ENCODE measurements at regions of chr6 and their contacts with region 1.

Region 1: GRCh38 chr6:113414511-113414910 is 442.6 kb upstream of the MARCKS start:
- DNase-seq: peak; percentile 76
- H3K4me3 ChIP-seq: no peak overlapping the region
- H3K27ac ChIP-seq: no peak overlapping the region
- H3K4me1 ChIP-seq: peaks cover 13% of the 10 kb centered on the region
- H3K27me3 ChIP-seq: no peaks in the 10 kb centered on the region
- CTCF ChIP-seq: peak; percentile 60 to 84

Region 2: GRCh38 chr6:113306552-113307145 is 107.9 kb before region 1 on chr6:
- CTCF ChIA-PET with region 1: interaction called, 3 read pairs
- dilution Hi-C with region 1: no loop called
- in situ Hi-C with region 1: no loop called
- intact Hi-C with region 1: loop called (anchors 2 kb)
- DNase-seq: peak; percentile 62
- H3K4me3 ChIP-seq: no peak overlapping the region
- H3K27ac ChIP-seq: no peak overlapping the region
- H3K4me1 ChIP-seq: no peaks in the 10 kb centered on the region
- H3K27me3 ChIP-seq: no peaks in the 10 kb centered on the region
- CTCF ChIP-seq: peak; percentile 47 to 68

Region 3: GRCh38 chr6:113428702-113429101 is 14.2 kb after region 1 on chr6:
- CTCF ChIA-PET with region 1: no interaction called
- dilution Hi-C with region 1: no loop called
- in situ Hi-C with region 1: no loop called
- intact Hi-C with region 1: no loop called
- DNase-seq: no peak
- H3K4me3 ChIP-seq: no peak overlapping the region
- H3K27ac ChIP-seq: no peak overlapping the region
- H3K4me1 ChIP-seq: peaks cover 10% of the 10 kb centered on the region
- H3K27me3 ChIP-seq: no peaks in the 10 kb centered on the region
- CTCF ChIP-seq: no peak

Region 4: GRCh38 chr6:113488812-113489685 is 74.5 kb after region 1 on chr6:
- CTCF ChIA-PET with region 1: no interaction called
- dilution Hi-C with region 1: no loop called
- in situ Hi-C with region 1: no loop called
- intact Hi-C with region 1: loop called (anchors 5 kb)
- DNase-seq: no peak
- H3K4me3 ChIP-seq: no peak overlapping the region
- H3K27ac ChIP-seq: no peak overlapping the region
- H3K4me1 ChIP-seq: peaks cover 1% of the 10 kb centered on the region
- H3K27me3 ChIP-seq: no peaks in the 10 kb centered on the region
- CTCF ChIP-seq: peak; percentile 15 to 42

Region 5: DNA sequence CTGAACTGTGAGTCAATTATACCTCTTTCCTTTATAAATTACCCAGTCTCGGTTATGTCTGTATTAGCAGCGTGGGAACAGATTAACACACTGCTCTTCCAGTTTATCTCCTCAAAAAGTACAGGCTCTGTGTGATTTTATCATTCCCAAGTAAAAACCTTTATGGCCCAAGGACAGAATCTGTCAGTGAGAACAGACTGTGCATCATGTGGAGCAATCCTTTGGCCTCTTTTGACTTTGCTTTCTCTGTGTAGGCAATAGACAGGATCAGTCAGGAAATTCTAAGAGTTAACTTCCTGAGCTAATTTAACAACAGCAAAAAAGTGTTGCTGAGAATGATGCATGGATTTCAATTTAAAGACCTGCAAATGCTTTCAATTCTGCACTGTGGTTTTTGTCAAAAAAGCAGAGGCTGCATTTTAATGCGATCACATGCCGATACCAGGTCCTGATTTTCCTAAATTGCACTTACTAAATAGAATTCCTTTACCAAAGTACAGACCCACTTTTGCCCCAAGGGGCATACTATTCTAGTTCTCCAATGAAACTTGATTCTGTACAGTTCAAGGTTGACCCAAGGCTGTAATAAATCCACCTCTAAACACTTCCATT is 196.0 kb after region 1 on chr6:
- CTCF ChIA-PET with region 1: no interaction called
- dilution Hi-C with region 1: no loop called
- in situ Hi-C with region 1: no loop called
- intact Hi-C with region 1: no loop called
- DNase-seq: no peak
- H3K4me3 ChIP-seq: no peak overlapping the region
- H3K27ac ChIP-seq: no peak overlapping the region
- H3K4me1 ChIP-seq: no peaks in the 10 kb centered on the region
- H3K27me3 ChIP-seq: no peaks in the 10 kb centered on the region
- CTCF ChIP-seq: no peak

Region 6: GRCh38 chr6:113632220-113632864 is 217.8 kb after region 1 on chr6:
- CTCF ChIA-PET with region 1: no interaction called
- dilution Hi-C with region 1: no loop called
- in situ Hi-C with region 1: no loop called
- intact Hi-C with region 1: loop called (anchors 5 kb)
- DNase-seq: peak; percentile 99
- H3K4me3 ChIP-seq: peak overlapping the region in 2 of 3 experiments; percentile 24
- H3K27ac ChIP-seq: peak overlapping the region; percentile 96
- H3K4me1 ChIP-seq: peaks cover 41% of the 10 kb centered on the region
- H3K27me3 ChIP-seq: no peaks in the 10 kb centered on the region
- CTCF ChIP-seq: no peak

Region 7: GRCh38 chr6:113690281-113691259 is 276.1 kb after region 1 on chr6:
- CTCF ChIA-PET with region 1: interaction called, 5 read pairs
- dilution Hi-C with region 1: no loop called
- in situ Hi-C with region 1: no loop called
- intact Hi-C with region 1: loop called (anchors 5 kb)
- DNase-seq: peak; percentile 94
- H3K4me3 ChIP-seq: no peak overlapping the region
- H3K27ac ChIP-seq: peak overlapping the region; percentile 49
- H3K4me1 ChIP-seq: peaks cover 17% of the 10 kb centered on the region
- H3K27me3 ChIP-seq: no peaks in the 10 kb centered on the region
- CTCF ChIP-seq: no peak

Measured in mammary epithelial cell (primary cell).